Activated naive CD4-positive, alpha-beta T cell treated with anti-CD3 and anti-CD28 coated beads for 36 hours (primary cell): ENCODE measurements at regions of chr14 and their contacts with region 1.

Region 1: GRCh38 chr14:56491299-56492285 is 88.0 kb upstream of the TMEM260 start:
- DNase-seq: peak; percentile 45
- H3K4me3 Mint-ChIP-seq: no peak overlapping the region
- H3K27ac Mint-ChIP-seq: no peak overlapping the region
- H3K4me1 Mint-ChIP-seq: peaks cover 10% of the 10 kb centered on the region
- H3K27me3 Mint-ChIP-seq: no peaks in the 10 kb centered on the region

Region 2: DNA sequence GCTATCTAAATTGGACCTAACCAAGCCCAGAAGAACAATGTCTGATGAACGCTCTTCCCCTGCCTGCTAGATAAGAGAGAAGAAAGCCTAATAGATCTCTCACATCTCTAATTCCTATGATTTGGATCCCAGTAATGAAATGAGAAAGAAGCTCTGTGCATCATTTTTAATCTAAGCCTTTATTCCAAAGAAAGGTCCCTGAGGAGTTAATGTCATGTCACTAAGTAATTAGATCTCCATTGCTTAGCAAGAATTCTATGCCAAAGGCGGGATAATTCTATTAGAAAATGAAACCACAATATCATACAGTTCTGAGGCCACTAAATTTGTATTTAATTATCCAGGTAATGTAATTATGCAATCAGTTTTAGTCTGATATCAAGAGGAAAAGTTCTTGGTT is 13.8 kb after region 1 on chr14:
- CTCF ChIA-PET with region 1: interaction called, 11 read pairs
- intact Hi-C with region 1: no loop called
- DNase-seq: no peak
- H3K4me3 Mint-ChIP-seq: no peak overlapping the region
- H3K27ac Mint-ChIP-seq: no peak overlapping the region
- H3K4me1 Mint-ChIP-seq: peaks cover 3% of the 10 kb centered on the region
- H3K27me3 Mint-ChIP-seq: peaks cover 5% of the 10 kb centered on the region

Region 3: DNA sequence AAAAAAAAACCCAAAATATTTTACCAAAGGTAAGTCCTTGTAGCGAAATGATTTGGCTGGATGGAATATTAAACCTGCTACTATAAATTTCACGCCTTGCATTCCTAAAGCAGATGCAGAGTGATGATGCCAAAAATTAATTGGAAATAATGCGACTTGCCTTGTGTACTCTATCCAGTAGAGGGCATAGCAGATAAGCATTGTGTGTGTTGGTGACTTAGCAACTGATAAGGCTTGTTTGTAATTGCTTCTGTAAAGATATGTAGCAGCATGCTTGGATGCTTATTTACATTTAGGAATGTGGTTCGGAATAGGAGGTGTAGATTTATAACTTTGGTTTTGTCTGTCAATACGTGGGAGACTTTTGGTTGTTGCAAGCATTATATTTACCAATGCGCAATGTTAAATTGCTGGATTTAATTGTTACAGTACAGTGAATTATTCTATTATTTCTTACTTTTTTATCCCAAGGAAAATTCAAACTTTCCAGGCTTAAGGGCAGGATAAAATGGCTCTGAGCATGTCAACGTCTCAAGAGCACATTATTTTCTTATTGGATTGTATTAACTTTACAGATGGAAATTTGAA is 168.5 kb after region 1 on chr14:
- CTCF ChIA-PET with region 1: interaction called, 6 read pairs
- intact Hi-C with region 1: loop called (anchors 1 kb)
- DNase-seq: no peak
- H3K4me3 Mint-ChIP-seq: no peak overlapping the region
- H3K27ac Mint-ChIP-seq: no peak overlapping the region
- H3K4me1 Mint-ChIP-seq: no peaks in the 10 kb centered on the region
- H3K27me3 Mint-ChIP-seq: no peaks in the 10 kb centered on the region

Region 4: GRCh38 chr14:56694609-56695008 is 203.0 kb after region 1 on chr14:
- CTCF ChIA-PET with region 1: no interaction called
- intact Hi-C with region 1: no loop called
- DNase-seq: no peak
- H3K4me3 Mint-ChIP-seq: no peak overlapping the region
- H3K27ac Mint-ChIP-seq: no peak overlapping the region
- H3K4me1 Mint-ChIP-seq: no peaks in the 10 kb centered on the region
- H3K27me3 Mint-ChIP-seq: peaks cover 21% of the 10 kb centered on the region

Region 5: DNA sequence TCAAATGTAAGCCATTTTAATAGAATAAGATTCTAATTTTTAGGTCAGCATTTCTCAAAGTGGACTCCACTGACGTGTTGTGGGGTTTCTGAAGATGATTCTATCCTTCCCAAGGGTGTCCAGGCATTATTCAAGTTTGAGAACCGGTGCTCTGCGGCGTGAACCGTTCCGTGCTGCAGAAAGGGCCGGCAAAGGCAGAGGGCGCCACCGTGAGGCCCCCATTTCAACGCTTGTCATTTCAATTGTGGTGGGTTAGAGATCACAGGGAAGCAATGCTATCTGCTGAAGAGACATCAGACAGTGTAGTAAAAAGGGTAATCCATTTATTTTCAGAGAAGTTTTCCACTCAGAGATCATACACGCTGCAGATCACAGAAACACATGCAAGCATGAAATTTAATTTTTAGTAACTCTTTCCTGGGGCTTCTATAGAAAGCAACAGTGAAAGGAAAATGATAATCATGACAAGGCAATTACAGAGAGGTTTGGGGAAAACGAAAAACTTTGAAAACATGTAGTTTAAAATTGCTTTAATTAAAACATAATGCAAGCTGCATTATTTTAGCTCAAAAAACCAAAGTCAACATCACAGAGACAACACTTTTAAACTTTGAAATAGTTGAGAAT is 575.4 kb after region 1 on chr14:
- CTCF ChIA-PET with region 1: interaction called, 10 read pairs
- intact Hi-C with region 1: loop called (anchors 2 kb)
- DNase-seq: peak; percentile 64
- H3K4me3 Mint-ChIP-seq: no peak overlapping the region
- H3K27ac Mint-ChIP-seq: no peak overlapping the region
- H3K4me1 Mint-ChIP-seq: peaks cover 4% of the 10 kb centered on the region
- H3K27me3 Mint-ChIP-seq: peaks cover 28% of the 10 kb centered on the region

Region 6: GRCh38 chr14:57205938-57206337 is 714.3 kb after region 1 on chr14:
- CTCF ChIA-PET with region 1: interaction called, 4 read pairs
- intact Hi-C with region 1: loop called (anchors 2 kb)
- DNase-seq: no peak
- H3K4me3 Mint-ChIP-seq: no peak overlapping the region
- H3K27ac Mint-ChIP-seq: no peak overlapping the region
- H3K4me1 Mint-ChIP-seq: no peaks in the 10 kb centered on the region
- H3K27me3 Mint-ChIP-seq: no peaks in the 10 kb centered on the region

Region 7: DNA sequence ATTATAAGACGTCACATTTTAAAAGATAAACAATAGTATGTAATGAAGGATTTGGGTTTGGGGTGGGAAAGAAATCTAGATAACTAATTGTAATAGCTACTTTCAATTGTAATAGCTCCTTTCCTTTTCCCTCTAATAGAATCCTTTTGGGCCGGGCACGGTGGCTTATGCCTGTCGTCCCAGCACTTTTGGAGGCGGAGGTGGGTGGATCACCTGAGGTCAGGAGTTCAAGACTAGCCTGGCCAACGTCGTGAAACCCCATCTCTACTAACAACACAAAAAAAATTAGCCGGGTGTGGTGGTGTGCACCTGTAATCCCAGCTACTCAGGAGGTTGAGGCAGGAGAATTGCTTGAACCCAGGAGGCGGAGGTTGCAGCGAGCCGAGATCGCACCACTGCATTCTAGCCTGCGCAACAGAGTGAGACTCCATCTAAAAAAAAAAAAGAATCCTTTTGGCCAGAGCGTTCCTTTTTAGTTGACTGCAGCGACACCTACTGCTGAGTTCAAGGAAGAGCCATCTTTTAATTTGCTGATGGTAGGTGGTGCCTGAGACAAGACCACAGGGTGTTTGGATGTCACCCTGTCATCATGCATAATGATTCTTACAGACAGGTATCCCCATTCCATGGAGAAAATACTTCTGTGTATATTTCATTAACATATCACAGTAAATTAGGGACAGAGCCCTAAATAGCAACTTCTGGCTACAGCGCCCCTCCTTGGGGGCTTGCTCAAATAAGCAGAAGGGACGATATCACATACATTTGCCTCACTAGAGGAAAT is 1580.9 kb after region 1 on chr14:
- CTCF ChIA-PET with region 1: interaction called, 3 read pairs
- intact Hi-C with region 1: loop called (anchors 1 kb)
- DNase-seq: peak; percentile 71
- H3K4me3 Mint-ChIP-seq: no peak overlapping the region
- H3K27ac Mint-ChIP-seq: no peak overlapping the region
- H3K4me1 Mint-ChIP-seq: no peaks in the 10 kb centered on the region
- H3K27me3 Mint-ChIP-seq: peaks cover 3% of the 10 kb centered on the region